Activated CD4-positive, alpha-beta memory T cell treated with anti-CD3 and anti-CD28 coated beads for 36 hours (primary cell): ENCODE measurements at regions of chr3 and their contacts with region 1.

Region 1: GRCh38 chr3:183555541-183556081 is at the start of gene KLHL6:
- DNase-seq: peak; percentile 90
- H3K4me3 Mint-ChIP-seq: peak within 1 kb of the TSS; percentile 100
- H3K27ac Mint-ChIP-seq: peak within 1 kb of the TSS; percentile 99
- H3K4me1 Mint-ChIP-seq: peaks cover 52% of the 10 kb centered on the region
- H3K27me3 Mint-ChIP-seq: no peaks in the 10 kb centered on the region
- total RNA-seq, gene KLHL6: 63.5 to 65.2 TPM

Region 2: DNA sequence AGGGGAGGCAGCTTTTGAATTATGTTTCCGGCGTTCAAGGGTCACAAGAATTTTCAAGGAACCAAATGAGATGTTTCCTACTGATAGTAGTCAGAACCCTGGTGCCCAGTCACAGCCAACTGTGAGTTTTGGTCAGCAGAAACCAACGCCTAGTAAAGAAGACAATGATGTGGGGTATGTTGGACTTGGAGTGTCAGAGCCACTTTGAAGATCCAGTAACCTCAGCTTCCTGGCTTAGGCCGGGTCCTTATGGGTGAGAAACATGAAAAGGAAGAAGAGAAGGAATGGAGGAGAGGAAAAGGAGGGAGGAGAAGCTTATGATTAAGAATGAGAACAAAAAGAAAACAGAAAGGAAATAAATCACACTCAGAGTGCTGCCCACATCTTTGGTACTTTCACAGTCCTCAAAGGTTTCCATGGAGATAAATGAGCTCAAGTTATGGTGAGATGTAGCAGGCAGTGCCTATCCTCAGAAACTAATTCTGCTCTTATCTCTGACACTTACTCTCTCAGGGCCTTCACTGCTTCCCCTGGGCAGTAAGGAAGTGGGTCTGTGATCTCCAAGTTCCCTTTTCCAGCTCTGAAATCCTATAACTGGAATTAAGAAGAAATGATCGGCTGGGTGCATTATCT is 125.2 kb before region 1 on chr3:
- CTCF ChIA-PET with region 1: interaction called, 3 read pairs
- POLR2A ChIA-PET with region 1: interaction called, 6 read pairs
- intact Hi-C with region 1: loop called (anchors 1 kb)
- DNase-seq: peak; percentile 66
- H3K4me3 Mint-ChIP-seq: peak overlapping the region; percentile 1
- H3K27ac Mint-ChIP-seq: peak overlapping the region; percentile 43
- H3K4me1 Mint-ChIP-seq: peaks cover 53% of the 10 kb centered on the region
- H3K27me3 Mint-ChIP-seq: peaks cover 3% of the 10 kb centered on the region

Region 3: GRCh38 chr3:183490670-183491069 is 64.9 kb before region 1 on chr3:
- CTCF ChIA-PET with region 1: no interaction called
- POLR2A ChIA-PET with region 1: no interaction called
- intact Hi-C with region 1: no loop called
- DNase-seq: no peak
- H3K4me3 Mint-ChIP-seq: no peak overlapping the region
- H3K27ac Mint-ChIP-seq: no peak overlapping the region
- H3K4me1 Mint-ChIP-seq: no peaks in the 10 kb centered on the region
- H3K27me3 Mint-ChIP-seq: no peaks in the 10 kb centered on the region

Region 4: GRCh38 chr3:183515968-183516851 is 39.4 kb before region 1 on chr3:
- CTCF ChIA-PET with region 1: no interaction called
- POLR2A ChIA-PET with region 1: interaction called, 6 read pairs
- intact Hi-C with region 1: loop called (anchors 1 kb)
- DNase-seq: peak; percentile 73
- H3K4me3 Mint-ChIP-seq: no peak overlapping the region
- H3K27ac Mint-ChIP-seq: peak overlapping the region; percentile 87
- H3K4me1 Mint-ChIP-seq: peaks cover 75% of the 10 kb centered on the region
- H3K27me3 Mint-ChIP-seq: no peaks in the 10 kb centered on the region

Region 5: GRCh38 chr3:183591881-183592521 is 36.4 kb after region 1 on chr3:
- CTCF ChIA-PET with region 1: interaction called, 5 read pairs
- POLR2A ChIA-PET with region 1: interaction called, 4 read pairs
- intact Hi-C with region 1: loop called (anchors 1 kb)
- DNase-seq: no peak
- H3K4me3 Mint-ChIP-seq: peak overlapping the region; percentile 59
- H3K27ac Mint-ChIP-seq: peak overlapping the region; percentile 69
- H3K4me1 Mint-ChIP-seq: peaks cover 32% of the 10 kb centered on the region
- H3K27me3 Mint-ChIP-seq: no peaks in the 10 kb centered on the region

Region 6: DNA sequence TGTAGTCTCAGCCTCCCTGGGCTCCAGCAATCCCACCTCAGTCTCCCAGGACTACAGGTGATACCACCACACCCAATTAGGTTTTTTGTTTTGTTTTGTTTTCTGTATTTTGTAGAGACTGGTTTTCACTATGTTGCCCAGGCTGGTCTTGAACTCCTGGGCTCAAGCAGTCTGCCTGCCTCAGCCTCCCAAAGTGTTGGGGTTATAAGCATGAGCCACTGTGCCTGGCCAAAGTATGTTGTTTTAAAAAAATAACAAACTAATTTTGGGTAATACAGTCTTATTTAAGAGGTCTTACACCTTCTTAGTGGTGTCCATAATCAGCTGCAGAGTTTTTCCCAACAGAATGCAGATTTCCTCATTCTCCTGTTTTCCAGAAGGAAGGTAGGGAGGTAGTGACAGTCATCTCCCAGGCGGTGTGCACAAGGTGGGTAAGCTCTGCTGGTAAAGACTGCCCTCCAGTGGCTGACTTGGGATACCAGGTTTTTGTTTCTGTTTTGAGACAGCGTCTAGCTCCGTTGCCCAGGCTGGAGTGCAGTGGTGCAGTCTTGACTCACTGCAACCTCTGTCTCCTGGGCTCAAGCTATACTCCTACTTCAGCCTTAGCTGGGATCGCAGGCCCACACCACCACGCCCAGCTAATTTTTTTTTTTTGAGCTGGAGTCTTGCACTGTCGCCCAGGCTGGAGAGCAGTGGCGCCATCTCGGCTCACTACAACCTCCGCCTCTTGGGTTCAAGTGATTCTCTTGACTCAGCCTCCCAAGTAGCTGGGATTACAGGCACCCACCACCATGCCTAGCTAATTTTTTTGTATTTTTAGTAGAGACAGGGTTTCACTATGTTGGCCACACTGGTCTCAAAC is 211.4 kb after region 1 on chr3:
- CTCF ChIA-PET with region 1: interaction called, 4 read pairs
- POLR2A ChIA-PET with region 1: no interaction called
- intact Hi-C with region 1: loop called (anchors 2 kb)
- DNase-seq: peak; percentile 81
- H3K4me3 Mint-ChIP-seq: no peak overlapping the region
- H3K27ac Mint-ChIP-seq: no peak overlapping the region
- H3K4me1 Mint-ChIP-seq: peaks cover 5% of the 10 kb centered on the region
- H3K27me3 Mint-ChIP-seq: no peaks in the 10 kb centered on the region

Region 7: GRCh38 chr3:184911570-184911969 is 1356.0 kb after region 1 on chr3:
- CTCF ChIA-PET with region 1: no interaction called
- POLR2A ChIA-PET with region 1: no interaction called
- intact Hi-C with region 1: no loop called
- DNase-seq: no peak
- H3K4me3 Mint-ChIP-seq: no peak overlapping the region
- H3K27ac Mint-ChIP-seq: no peak overlapping the region
- H3K4me1 Mint-ChIP-seq: no peaks in the 10 kb centered on the region
- H3K27me3 Mint-ChIP-seq: no peaks in the 10 kb centered on the region